MCF 10A (cell line): ENCODE measurements at regions of chr7 and their contacts with region 1.

Region 1: DNA sequence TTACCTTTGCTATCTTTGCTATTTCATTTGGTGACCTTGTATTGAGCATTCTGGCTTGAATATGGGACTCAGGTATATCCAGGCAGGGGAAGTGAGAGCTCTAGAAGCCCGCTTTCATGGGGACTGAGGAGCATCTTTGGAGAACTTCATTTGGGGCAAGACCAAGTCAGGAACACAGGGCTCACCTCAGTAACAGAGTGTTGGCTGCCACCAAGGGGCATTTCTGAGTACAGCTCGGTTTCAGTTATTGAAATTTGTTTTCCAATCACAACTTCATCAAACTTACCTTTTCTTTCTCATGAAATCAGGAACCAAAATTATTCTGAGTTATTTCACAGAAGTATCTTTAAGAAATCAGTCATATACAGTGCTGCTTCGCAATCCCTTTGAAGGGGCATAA is 337.2 kb downstream of the C7orf25 start:
- DNase-seq: peak; percentile 31
- H3K4me3 Mint-ChIP-seq: no peak overlapping the region
- H3K27ac Mint-ChIP-seq: no peak overlapping the region
- H3K4me1 Mint-ChIP-seq: peaks cover 15% of the 10 kb centered on the region
- H3K27me3 Mint-ChIP-seq: no peaks in the 10 kb centered on the region
- CTCF ChIP-seq: peak; percentile 43

Region 2: GRCh38 chr7:42493436-42494238 is 81.0 kb before region 1 on chr7:
- CTCF ChIA-PET with region 1: interaction called, 11 read pairs
- POLR2A ChIA-PET with region 1: interaction called, 12 read pairs
- intact Hi-C with region 1: no loop called
- DNase-seq: peak; percentile 94
- H3K4me3 Mint-ChIP-seq: peak overlapping the region; percentile 79
- H3K27ac Mint-ChIP-seq: peak overlapping the region; percentile 93
- H3K4me1 Mint-ChIP-seq: peaks cover 29% of the 10 kb centered on the region
- H3K27me3 Mint-ChIP-seq: no peaks in the 10 kb centered on the region
- CTCF ChIP-seq: no peak

Region 3: GRCh38 chr7:42617806-42618457 is 43.2 kb after region 1 on chr7:
- CTCF ChIA-PET with region 1: no interaction called
- POLR2A ChIA-PET with region 1: no interaction called
- intact Hi-C with region 1: no loop called
- DNase-seq: no peak
- H3K4me3 Mint-ChIP-seq: no peak overlapping the region
- H3K27ac Mint-ChIP-seq: no peak overlapping the region
- H3K4me1 Mint-ChIP-seq: peaks cover 5% of the 10 kb centered on the region
- H3K27me3 Mint-ChIP-seq: no peaks in the 10 kb centered on the region
- CTCF ChIP-seq: no peak

Region 4: GRCh38 chr7:42690794-42691639 is 116.3 kb after region 1 on chr7:
- CTCF ChIA-PET with region 1: interaction called, 14 read pairs
- POLR2A ChIA-PET with region 1: no interaction called
- intact Hi-C with region 1: loop called (anchors 1 kb)
- DNase-seq: peak; percentile 76
- H3K4me3 Mint-ChIP-seq: no peak overlapping the region
- H3K27ac Mint-ChIP-seq: peak overlapping the region; percentile 19
- H3K4me1 Mint-ChIP-seq: no peaks in the 10 kb centered on the region
- H3K27me3 Mint-ChIP-seq: no peaks in the 10 kb centered on the region
- CTCF ChIP-seq: peak; percentile 71

Region 5: DNA sequence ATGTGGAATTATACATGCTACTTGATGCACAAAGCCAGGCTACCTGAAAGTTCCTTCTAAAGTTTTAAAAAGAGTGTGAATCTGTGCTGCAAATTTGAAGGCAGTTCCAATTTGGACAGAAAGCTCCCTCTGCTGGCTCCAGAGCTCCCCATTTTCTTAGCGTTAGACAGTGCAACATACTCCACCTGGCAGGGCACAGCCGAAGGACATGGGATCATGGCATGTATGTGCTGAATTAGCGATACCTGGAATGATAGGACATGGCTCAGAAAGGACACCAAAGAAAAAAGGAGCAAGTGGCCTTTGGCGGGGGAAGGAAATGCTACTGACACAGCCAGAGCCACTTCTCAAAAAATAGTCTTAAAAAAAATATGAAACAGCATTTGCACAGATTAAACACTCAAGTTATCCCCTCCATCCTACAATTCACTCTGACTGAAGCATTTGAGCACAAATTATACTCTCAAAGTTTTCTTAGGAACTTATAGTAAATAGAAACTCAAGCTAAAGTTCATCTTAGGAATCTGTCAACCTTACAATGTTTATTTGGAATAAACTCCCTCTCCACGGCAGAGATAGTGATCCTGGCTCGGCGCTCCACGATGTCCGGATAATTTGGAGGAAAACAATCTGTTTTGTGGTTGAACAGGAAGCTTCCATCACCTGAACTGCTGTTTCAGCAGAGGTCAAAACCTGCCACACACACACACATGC is 257.2 kb after region 1 on chr7:
- CTCF ChIA-PET with region 1: interaction called, 4 read pairs
- POLR2A ChIA-PET with region 1: interaction called, 3 read pairs
- intact Hi-C with region 1: loop called (anchors 1 kb)
- DNase-seq: peak; percentile 61
- H3K4me3 Mint-ChIP-seq: no peak overlapping the region
- H3K27ac Mint-ChIP-seq: no peak overlapping the region
- H3K4me1 Mint-ChIP-seq: peaks cover 16% of the 10 kb centered on the region
- H3K27me3 Mint-ChIP-seq: no peaks in the 10 kb centered on the region
- CTCF ChIP-seq: peak; percentile 61

Region 6: GRCh38 chr7:42886129-42886528 is 311.4 kb after region 1 on chr7:
- CTCF ChIA-PET with region 1: no interaction called
- POLR2A ChIA-PET with region 1: no interaction called
- intact Hi-C with region 1: loop called (anchors 10 kb)
- DNase-seq: peak; percentile 42
- H3K4me3 Mint-ChIP-seq: no peak overlapping the region
- H3K27ac Mint-ChIP-seq: no peak overlapping the region
- H3K4me1 Mint-ChIP-seq: peaks cover 9% of the 10 kb centered on the region
- H3K27me3 Mint-ChIP-seq: no peaks in the 10 kb centered on the region
- CTCF ChIP-seq: peak; percentile 56